ENCODE measurements at regions of chr7 and their contacts with region 1.

Region 1: DNA sequence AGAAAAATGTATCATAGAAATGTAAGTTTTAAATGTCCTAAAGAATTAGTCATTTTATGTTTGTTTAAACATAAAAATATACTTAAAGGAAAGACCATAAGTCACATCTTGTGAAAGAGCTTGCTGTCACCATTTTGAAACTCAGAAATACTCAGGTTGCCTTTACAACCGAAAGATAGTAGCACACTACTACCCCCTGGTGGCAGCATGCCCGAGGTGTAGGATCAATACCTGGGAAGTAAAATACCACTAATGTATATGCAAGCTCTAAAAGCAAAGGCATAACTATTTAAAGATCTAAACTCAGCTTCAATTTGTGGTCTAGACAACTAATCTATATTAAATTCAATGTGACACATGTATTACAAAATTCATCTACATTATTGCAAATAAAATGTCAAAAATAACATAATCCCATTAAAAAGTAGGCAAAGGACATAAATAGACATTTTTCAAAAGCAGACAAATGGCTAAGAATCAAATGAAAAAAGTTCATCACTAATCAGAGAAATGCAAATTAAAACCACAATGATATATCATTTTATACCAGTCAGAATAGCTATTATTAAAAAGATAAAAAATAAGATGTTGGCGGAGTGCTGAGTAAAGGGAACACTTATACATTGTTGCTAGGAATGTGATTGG is 47.7 kb upstream of the FGL2 start:
- DNase-seq: peak; percentile 91
- H3K4me3 Mint-ChIP-seq: no peak overlapping the region
- H3K27ac Mint-ChIP-seq: no peak overlapping the region
- H3K4me1 Mint-ChIP-seq: peaks cover 3% of the 10 kb centered on the region
- H3K27me3 Mint-ChIP-seq: no peaks in the 10 kb centered on the region

Region 2: DNA sequence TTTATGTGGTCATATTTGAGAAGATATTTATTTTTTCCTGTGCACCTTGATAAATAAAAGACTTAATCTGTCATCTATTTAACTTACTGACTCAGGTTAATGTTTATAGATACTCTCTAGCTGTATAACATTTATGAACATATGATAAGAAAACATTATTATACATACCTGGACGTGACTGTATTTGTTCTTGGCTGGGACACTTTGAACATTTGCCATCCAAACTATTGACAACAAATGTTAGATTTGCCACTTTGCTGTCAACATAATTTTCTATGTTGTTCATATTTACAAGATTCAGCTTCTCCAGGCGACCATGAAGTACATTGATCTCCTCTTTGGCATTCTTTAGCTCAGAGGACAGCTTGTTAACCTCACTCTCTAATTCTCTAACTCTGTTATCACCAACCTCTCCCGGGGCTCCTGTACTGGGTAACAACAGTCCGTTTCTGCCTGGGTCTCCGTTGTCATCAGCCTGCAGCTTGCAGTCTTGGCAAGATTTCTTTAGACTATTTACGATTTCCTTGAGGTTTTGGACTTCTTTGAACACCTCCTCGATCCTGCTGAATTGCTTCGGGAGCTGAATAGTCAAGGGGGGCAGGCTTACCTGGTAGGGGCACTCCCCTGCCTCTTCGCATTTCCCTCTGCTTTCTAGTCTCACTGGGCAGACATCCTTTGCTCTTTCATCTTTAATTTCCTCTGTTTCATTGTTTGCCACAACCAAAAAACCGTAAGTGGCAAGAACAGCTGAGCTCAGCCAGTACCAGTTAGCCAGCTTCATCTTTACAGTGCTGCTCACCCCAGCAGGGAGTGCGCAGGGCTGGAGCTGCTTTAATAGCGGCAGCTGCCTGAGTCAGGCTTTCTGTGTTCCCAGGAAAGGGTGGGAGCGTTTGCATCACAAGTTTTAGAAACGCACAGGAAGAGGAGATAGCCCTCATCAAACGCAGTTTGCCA is 48.0 kb before region 1 on chr7 and contains the start of gene FGL2:
- CTCF ChIA-PET with region 1: interaction called, 19 read pairs
- POLR2A ChIA-PET with region 1: no interaction called
- intact Hi-C with region 1: no loop called
- DNase-seq: peak; percentile 53
- H3K4me3 Mint-ChIP-seq: peak within 1 kb of the TSS; percentile 74
- H3K27ac Mint-ChIP-seq: peak within 1 kb of the TSS; percentile 68
- H3K4me1 Mint-ChIP-seq: peaks cover 26% of the 10 kb centered on the region
- H3K27me3 Mint-ChIP-seq: no peaks in the 10 kb centered on the region
- total RNA-seq, gene FGL2: 0.55 to 0.65 TPM

Region 3: GRCh38 chr7:77216181-77216845 is 31.0 kb before region 1 on chr7:
- CTCF ChIA-PET with region 1: no interaction called
- POLR2A ChIA-PET with region 1: no interaction called
- intact Hi-C with region 1: no loop called
- DNase-seq: no peak
- H3K4me3 Mint-ChIP-seq: no peak overlapping the region
- H3K27ac Mint-ChIP-seq: no peak overlapping the region
- H3K4me1 Mint-ChIP-seq: no peaks in the 10 kb centered on the region
- H3K27me3 Mint-ChIP-seq: no peaks in the 10 kb centered on the region

Region 4: DNA sequence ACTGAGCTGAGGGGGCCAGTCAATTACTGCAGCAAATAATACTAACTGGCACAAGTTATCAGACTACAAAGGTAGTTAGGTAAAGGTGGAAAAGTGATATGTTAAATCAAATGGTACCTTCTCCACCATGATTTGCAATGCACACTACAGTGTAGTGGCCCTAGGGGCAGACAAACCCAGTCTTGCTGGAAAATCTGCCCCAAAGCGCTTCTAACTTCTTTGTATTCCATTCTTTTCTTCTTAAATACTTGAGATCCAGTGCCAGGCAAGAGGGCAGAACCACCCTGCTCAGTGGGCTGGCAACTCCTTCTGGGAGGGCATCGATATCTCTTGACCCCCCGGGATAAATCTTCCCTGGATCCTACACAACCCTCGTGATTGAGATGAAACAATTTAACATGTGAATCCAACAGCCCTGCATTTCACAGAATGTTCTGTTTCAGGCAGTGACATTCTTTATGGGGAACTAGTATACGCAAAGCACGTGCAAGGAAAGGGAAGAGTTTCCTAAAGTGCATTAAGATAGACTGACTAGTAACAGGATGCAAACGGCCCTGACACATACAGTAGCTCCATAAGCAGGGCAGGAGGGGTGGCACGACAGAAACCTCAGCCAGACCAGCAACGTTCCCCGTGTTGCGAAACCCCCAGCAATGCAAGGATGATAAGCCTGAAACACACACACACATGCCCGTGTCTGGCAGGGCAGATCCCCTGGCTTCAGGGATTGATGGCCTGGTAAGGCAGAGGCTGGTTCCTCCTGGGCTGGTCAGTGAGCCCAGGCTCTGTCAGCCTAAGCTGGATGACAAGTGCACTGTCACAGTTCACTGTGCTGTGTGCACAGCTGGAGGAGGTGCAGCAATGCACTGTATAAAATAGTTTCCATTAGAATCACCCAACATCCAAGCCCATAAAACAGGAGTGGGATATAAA is 79.6 kb after region 1 on chr7:
- CTCF ChIA-PET with region 1: interaction called, 50 read pairs
- POLR2A ChIA-PET with region 1: interaction called, 3 read pairs
- intact Hi-C with region 1: loop called (anchors 1 kb)
- DNase-seq: no peak
- H3K4me3 Mint-ChIP-seq: no peak overlapping the region
- H3K27ac Mint-ChIP-seq: no peak overlapping the region
- H3K4me1 Mint-ChIP-seq: peaks cover 49% of the 10 kb centered on the region
- H3K27me3 Mint-ChIP-seq: no peaks in the 10 kb centered on the region

Region 5: DNA sequence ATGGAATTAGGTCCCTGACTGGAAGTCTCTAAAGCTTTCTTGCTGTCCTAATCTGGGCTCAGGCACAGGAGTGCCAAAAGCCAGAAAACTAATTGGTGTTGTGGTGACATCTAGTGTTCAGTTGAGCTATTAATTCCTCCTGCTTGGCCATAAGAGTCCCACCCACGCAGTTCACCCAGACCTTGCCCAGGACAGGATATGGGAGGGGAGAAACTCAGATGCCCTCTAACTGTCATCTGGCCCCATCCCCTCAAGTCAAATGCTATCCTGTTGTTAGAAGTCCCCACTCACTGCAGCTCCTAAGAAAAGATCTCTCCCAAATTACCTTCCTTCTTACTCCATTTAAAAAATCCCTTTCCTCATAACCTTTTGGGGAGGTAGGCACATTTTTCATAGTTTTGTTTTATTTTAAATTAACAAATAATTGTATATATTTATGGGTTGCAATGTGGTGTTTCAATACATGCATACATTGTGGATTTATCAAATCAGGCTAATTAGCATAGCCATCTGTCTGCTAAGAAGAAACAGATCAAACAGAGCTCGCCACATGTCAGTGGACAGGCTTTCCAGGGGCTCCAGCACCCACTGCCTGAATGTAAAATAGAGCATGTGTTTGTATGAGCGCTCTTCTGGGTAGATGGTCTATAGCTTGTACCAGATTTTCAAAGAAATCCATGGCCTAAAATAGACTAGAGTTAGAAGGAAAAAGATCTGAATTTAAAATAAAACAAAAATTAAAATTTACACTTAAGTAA is 84.8 kb after region 1 on chr7:
- CTCF ChIA-PET with region 1: interaction called, 50 read pairs
- POLR2A ChIA-PET with region 1: interaction called, 3 read pairs
- intact Hi-C with region 1: loop called (anchors 1 kb)
- DNase-seq: peak; percentile 69
- H3K4me3 Mint-ChIP-seq: no peak overlapping the region
- H3K27ac Mint-ChIP-seq: no peak overlapping the region
- H3K4me1 Mint-ChIP-seq: peaks cover 45% of the 10 kb centered on the region
- H3K27me3 Mint-ChIP-seq: no peaks in the 10 kb centered on the region

Region 6: DNA sequence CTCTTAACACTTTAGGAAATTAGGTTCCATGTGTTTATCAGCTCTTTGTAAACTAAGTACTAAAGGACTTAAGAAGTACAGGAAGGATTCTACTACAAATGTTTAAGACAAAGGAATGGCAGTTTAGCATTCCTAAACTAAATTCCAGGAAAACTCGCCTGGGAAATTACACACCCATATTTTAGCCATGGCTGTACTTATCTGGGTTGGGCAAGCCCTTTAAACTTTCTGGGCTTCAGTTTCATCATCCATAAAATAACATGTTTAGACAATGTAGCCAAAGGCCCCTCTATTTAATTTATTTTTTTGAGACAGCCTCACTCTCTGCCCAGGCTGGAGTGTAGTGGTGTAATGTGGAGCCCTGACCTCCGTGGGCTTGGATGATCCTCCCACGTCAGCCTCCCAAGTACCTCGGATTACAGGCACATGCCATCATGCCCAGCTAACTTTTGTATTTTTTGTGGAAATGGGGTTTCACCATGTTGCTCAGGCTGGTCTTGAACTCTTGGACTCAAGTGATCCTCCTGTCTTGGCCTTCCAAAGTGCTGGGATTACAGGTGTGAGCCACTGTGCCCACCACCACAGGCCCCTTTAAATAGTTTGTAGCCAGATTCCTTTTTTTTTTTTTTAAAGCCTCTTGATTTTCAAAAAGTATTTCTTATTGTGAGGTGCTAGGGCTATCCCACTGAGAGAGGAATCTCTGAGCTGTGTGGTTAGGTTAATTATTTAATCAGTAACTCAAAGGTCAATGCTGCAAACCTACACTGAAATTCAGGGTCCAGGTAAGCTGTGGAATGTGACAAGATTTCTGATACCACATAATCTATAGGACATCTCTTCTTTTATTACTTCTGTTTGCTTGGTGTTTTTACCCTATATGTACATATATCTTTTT is 518.8 kb after region 1 on chr7:
- CTCF ChIA-PET with region 1: no interaction called
- POLR2A ChIA-PET with region 1: no interaction called
- intact Hi-C with region 1: no loop called
- DNase-seq: no peak
- H3K4me3 Mint-ChIP-seq: no peak overlapping the region
- H3K27ac Mint-ChIP-seq: no peak overlapping the region
- H3K4me1 Mint-ChIP-seq: peaks cover 7% of the 10 kb centered on the region
- H3K27me3 Mint-ChIP-seq: no peaks in the 10 kb centered on the region

Measured in activated CD4-positive, alpha-beta memory T cell treated with anti-CD3 and anti-CD28 coated beads for 36 hours (primary cell).